Calu3 (cell line): ENCODE measurements at regions of chr7 and their contacts with region 1.

Region 1: GRCh38 chr7:102390697-102391484 is 5.3 kb upstream of the PRKRIP1 start:
- DNase-seq: peak; percentile 85
- H3K4me3 Mint-ChIP-seq: no peak overlapping the region
- H3K27ac Mint-ChIP-seq: no peak overlapping the region
- H3K4me1 Mint-ChIP-seq: peaks cover 24% of the 10 kb centered on the region
- H3K27me3 Mint-ChIP-seq: no peaks in the 10 kb centered on the region
- CTCF ChIP-seq: peak; percentile 78

Region 2: DNA sequence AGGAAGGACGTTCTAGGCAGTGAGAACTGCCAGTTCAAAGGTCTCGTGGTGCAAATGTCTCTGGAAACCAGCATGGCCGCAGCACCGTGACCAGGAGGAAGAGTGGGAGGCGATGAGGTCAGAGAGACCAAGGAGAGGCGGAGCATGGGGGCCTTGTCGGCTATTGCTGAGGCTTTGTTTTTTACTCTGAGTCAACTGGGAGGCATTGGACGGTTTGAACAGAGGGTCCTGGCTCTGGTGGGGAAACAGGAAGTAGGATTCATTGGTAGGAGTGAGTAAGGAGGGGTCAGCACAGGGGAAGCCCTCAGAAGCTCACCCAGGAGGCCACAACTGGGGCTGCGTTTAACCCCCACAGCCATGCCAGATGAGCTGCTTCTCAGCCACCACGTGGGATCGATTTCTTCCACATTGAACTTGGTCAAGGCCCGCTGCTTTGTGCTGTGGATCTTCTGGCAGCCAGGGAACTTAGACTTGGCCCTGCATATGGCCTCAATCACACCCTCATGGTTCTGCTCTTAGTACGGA is 126.5 kb before region 1 on chr7:
- CTCF ChIA-PET with region 1: no interaction called
- intact Hi-C with region 1: no loop called
- DNase-seq: no peak
- H3K4me3 Mint-ChIP-seq: no peak overlapping the region
- H3K27ac Mint-ChIP-seq: no peak overlapping the region
- H3K4me1 Mint-ChIP-seq: no peaks in the 10 kb centered on the region
- H3K27me3 Mint-ChIP-seq: peaks cover 33% of the 10 kb centered on the region
- CTCF ChIP-seq: no peak

Region 3: GRCh38 chr7:102279537-102280400 is 111.1 kb before region 1 on chr7:
- CTCF ChIA-PET with region 1: no interaction called
- intact Hi-C with region 1: loop called (anchors 2 kb)
- DNase-seq: peak; percentile 56
- H3K4me3 Mint-ChIP-seq: no peak overlapping the region
- H3K27ac Mint-ChIP-seq: no peak overlapping the region
- H3K4me1 Mint-ChIP-seq: no peaks in the 10 kb centered on the region
- H3K27me3 Mint-ChIP-seq: no peaks in the 10 kb centered on the region
- CTCF ChIP-seq: peak; percentile 67